GM13976 (cell line): ENCODE measurements at regions of chr20 and their contacts with region 1.

Region 1: GRCh38 chr20:44217342-44218092 is 6.9 kb upstream of the OSER1 start:
- DNase-seq: peak; percentile 53
- CTCF ChIP-seq: peak; percentile 93

Region 2: GRCh38 chr20:43844778-43845614 is 372.5 kb before region 1 on chr20:
- in situ Hi-C with region 1: no loop called
- DNase-seq: no peak
- CTCF ChIP-seq: no peak

Region 3: DNA sequence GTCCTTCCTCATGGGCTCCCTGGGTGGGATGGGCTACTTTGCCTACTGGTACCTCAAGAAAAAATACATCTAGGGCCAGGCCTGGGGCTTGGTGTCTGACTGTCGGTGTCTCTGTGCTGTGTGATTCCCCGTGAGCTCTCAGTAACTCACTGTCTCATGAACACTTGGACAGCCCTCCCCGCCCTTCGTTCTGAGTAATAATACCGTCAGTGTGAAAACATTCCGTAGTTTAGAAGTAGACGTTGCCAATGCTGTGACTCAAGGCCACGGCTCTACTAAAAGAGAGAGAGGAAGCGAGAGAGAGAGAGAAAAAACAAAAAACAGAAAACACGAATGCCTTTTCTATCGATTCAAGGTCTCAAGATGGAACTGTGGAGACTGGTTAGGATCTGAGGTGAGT is 61.7 kb after region 1 on chr20:
- in situ Hi-C with region 1: no loop called
- DNase-seq: no peak
- CTCF ChIP-seq: no peak

Region 4: DNA sequence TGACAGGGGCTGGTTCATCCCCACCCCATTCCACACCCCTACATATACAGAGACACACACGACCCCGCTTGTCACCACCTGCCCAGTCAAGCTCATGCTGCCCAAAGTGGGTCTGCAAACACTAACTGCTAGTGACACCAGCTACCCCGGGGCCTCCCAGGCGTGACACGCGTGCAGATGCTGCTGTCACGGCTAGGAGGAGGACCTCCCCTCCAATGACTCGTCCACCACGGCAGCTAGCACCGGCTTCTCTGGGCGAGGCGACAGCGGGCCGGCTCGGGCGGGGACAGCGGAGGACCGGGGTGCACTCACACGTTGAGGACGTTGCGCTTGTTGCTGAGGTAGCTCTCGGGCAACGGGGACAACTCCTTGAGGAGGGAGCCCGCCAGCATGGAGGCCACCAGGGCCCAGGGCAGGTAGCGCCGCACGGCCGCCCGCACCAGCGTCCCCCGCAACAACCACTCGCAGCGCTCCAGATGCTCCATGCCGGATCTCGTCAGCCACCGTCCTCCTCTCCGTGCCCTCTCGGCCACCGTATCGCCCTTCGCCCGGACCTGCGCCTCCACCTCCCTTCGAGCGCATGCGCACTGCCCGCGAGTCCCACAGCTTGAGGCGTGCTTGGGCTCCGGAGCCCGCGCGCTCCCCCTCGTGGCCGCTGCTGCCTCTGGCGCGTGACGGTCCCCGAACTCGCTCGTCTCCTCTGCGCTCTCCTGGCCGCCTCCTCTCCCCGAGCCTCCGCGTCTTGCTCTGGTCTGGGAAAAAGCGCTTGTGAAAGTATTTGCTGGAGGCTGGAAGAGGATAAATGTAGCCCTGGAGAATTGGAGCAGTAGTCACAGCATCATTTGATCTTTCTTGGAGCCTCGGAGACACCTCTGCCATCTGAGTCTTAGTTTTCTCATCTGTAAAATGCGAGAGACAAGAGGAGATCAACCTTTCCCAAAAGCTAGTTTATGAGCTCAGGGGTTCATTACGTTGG is 93.4 kb after region 1 on chr20 and contains the start of gene FITM2:
- in situ Hi-C with region 1: loop called (anchors 5 kb)
- DNase-seq: peak; percentile 100
- CTCF ChIP-seq: peak; percentile 95

Region 5: GRCh38 chr20:44384423-44385027 is 167.0 kb after region 1 on chr20:
- in situ Hi-C with region 1: loop called (anchors 5 kb)
- DNase-seq: peak; percentile 70
- CTCF ChIP-seq: peak; percentile 88